ENCODE measurements at regions of chr5 and their contacts with region 1.

Region 1: GRCh38 chr5:115841382-115842088 is at the starts of genes AP3S1 and ATG12:
- DNase-seq: peak; percentile 91
- ATAC-seq: peak; percentile 89
- H3K4me3 ChIP-seq: peak within 1 kb of the TSS; percentile 82
- H3K27ac ChIP-seq: peak within 1 kb of the TSS; percentile 99
- H3K4me1 ChIP-seq: peaks cover 5% of the 10 kb centered on the region
- H3K27me3 ChIP-seq: no peaks in the 10 kb centered on the region
- CTCF ChIP-seq: no peak
- POLR2A ChIP-seq: peak; percentile 91
- RAD21 ChIP-seq: no peak
- total RNA-seq, gene AP3S1: 21.9 and 93.9 TPM in 2 replicates
- total RNA-seq, gene ATG12: 95.7 and 117 TPM in 2 replicates

Region 2: DNA sequence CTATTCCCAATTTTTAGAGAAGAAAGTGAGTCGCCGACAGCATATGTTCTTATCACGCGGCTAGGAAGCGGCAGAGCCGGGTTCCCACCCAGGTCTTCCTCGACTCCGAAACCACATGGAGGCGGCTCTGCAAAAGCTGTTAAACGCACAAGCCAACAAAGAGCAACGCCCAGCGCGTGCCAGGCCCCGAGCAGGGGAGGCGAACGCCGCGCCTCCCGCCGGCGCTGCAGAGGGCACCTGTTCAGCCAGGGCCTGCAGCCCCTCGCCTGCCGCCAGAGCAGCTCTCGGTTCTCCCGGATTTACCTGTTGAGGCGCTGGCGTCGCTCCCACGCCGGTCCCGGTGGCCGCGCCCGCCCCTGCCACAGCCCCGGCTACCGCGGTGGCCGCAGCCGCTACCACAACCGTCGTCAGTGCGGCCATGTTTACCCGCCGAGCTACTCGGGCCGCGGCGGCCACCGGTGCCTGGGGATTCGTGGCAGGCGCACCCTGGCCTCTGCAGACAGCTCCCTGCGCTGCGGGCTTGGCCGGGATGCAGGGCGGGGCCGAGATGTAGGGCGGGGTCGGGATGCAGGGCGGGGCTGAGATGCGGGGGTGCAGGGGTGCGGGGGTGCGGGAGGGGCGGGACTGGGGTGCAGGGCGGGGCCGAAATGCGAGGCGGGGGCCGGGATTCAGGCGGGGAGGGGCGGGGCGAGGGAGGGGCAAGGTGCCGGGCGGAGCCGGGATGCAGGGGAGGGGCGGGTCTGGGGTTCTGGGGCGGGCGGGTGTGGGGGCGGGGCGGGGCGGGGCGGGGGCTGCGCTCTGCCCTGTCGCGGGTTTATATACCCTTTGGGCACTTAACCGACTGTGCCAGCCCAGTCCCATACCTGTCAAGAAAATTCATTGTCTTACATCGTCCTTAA is 545.2 kb before region 1 on chr5 and contains the start of gene CCDC112:
- CTCF ChIA-PET with region 1: no interaction called
- POLR2A ChIA-PET with region 1: no interaction called
- dilution Hi-C with region 1: no loop called
- in situ Hi-C with region 1: loop called (anchors 25 kb)
- intact Hi-C with region 1: loop called (anchors 5 kb)
- DNase-seq: peak; percentile 66
- ATAC-seq: peak; percentile 96
- H3K4me3 ChIP-seq: peak within 1 kb of the TSS; percentile 68
- H3K27ac ChIP-seq: peak within 1 kb of the TSS; percentile 23; the same call in 1 of the 2 replicates
- H3K4me1 ChIP-seq: no peaks in the 10 kb centered on the region
- H3K27me3 ChIP-seq: no peaks in the 10 kb centered on the region; the same call in 1 of the 2 replicates
- CTCF ChIP-seq: no peak
- POLR2A ChIP-seq: 0 out of 2 replicates have a peak, but pooled peaks have one; percentile 29
- RAD21 ChIP-seq: no peak
- total RNA-seq, gene CCDC112: 2.0 and 5.0 TPM in 2 replicates

Region 3: GRCh38 chr5:115625579-115626444 is 215.7 kb before region 1 on chr5 and contains the start of gene TMED7:
- CTCF ChIA-PET with region 1: no interaction called
- POLR2A ChIA-PET with region 1: interaction called, 6 read pairs
- dilution Hi-C with region 1: no loop called
- in situ Hi-C with region 1: loop called (anchors 5 kb)
- intact Hi-C with region 1: no loop called
- DNase-seq: peak; percentile 97
- ATAC-seq: peak; percentile 97
- H3K4me3 ChIP-seq: peak within 1 kb of the TSS; percentile 84
- H3K27ac ChIP-seq: peak within 1 kb of the TSS; percentile 93
- H3K4me1 ChIP-seq: peaks cover 5% of the 10 kb centered on the region
- H3K27me3 ChIP-seq: no peaks in the 10 kb centered on the region
- CTCF ChIP-seq: no peak
- POLR2A ChIP-seq: peak; percentile 88
- RAD21 ChIP-seq: no peak
- total RNA-seq, gene TMED7: 75.6 and 173 TPM in 2 replicates

Region 4: GRCh38 chr5:115977988-115978387 is 136.5 kb after region 1 on chr5:
- CTCF ChIA-PET with region 1: no interaction called
- POLR2A ChIA-PET with region 1: no interaction called
- dilution Hi-C with region 1: no loop called
- in situ Hi-C with region 1: no loop called
- intact Hi-C with region 1: loop called (anchors 2 kb)
- DNase-seq: peak; percentile 92
- ATAC-seq: peak; percentile 82
- H3K4me3 ChIP-seq: no peak overlapping the region
- H3K27ac ChIP-seq: no peak overlapping the region; the same call in 1 of the 2 replicates
- H3K4me1 ChIP-seq: peaks cover 17% of the 10 kb centered on the region
- H3K27me3 ChIP-seq: no peaks in the 10 kb centered on the region
- CTCF ChIP-seq: no peak
- POLR2A ChIP-seq: no peak
- RAD21 ChIP-seq: no peak

Region 5: DNA sequence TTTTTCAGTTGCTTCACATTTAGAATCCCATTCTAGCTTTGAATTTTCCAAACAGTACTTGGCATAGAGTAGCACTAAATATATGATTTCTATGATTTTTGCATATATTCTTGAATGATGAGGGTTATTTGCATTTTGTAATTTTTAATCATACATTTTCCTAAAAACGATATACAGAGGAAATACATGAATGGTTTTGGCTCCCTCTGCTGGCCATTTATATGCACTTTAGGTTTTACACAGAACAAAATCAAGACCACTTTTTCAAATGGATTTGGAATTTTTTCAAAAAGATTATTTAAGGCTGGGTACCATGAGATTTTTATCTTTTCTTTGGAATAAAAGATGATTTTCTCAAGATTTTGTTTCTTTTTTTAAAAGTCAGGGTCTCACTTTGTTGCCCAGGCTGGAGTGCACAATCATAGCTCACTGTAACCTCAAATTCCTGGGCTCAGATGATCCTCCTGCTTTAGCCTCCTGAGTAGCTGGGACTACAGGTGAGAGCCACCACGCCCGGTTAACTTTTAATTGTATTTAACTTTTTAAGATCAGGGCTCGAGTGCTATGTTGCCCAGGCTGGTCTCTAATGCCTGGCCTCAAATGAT is 226.6 kb after region 1 on chr5:
- CTCF ChIA-PET with region 1: no interaction called
- POLR2A ChIA-PET with region 1: no interaction called
- dilution Hi-C with region 1: no loop called
- in situ Hi-C with region 1: no loop called
- intact Hi-C with region 1: loop called (anchors 5 kb)
- DNase-seq: peak; percentile 72
- ATAC-seq: peak; percentile 66
- H3K4me3 ChIP-seq: no peak overlapping the region
- H3K27ac ChIP-seq: no peak overlapping the region
- H3K4me1 ChIP-seq: no peaks in the 10 kb centered on the region
- H3K27me3 ChIP-seq: peaks cover 3% of the 10 kb centered on the region; the same call in 1 of the 2 replicates
- CTCF ChIP-seq: peak; percentile 87
- POLR2A ChIP-seq: no peak
- RAD21 ChIP-seq: peak; percentile 82